ENCODE measurements at regions of chr1 and their contacts with region 1.

Region 1: GRCh38 chr1:39653546-39654031 is 14.1 kb upstream of the HEYL start:
- DNase-seq: peak; percentile 75
- CTCF ChIP-seq: peak; percentile 88

Region 2: GRCh38 chr1:39623053-39623452 is 30.5 kb before region 1 on chr1:
- CTCF ChIA-PET with region 1: interaction called, 43 read pairs
- POLR2A ChIA-PET with region 1: no interaction called
- DNase-seq: no peak
- CTCF ChIP-seq: no peak

Region 3: GRCh38 chr1:39639305-39640130 is 14.1 kb before region 1 on chr1 and contains the start of gene HEYL:
- CTCF ChIA-PET with region 1: interaction called, 44 read pairs
- POLR2A ChIA-PET with region 1: no interaction called
- DNase-seq: peak; percentile 71
- CTCF ChIP-seq: peak; percentile 29

Region 4: DNA sequence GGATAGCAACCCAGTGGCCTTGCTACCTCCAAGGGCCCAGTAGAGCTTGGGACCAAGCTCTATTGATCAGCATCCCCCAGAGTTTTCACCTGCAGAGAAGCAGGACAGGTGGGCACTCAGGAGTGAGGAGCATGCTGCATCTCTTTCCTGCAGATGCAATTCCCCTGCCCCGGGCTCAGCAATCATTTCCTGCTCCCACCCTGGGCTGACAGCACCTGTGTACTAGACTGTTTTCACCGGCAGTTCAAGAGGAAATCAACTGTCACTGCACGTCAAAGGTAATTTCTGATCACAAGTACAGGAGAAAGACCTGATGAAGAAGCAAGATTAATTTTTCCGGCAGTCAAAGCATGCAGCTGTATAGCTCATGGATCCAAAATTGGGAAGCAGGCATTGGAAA is 27.2 kb after region 1 on chr1:
- CTCF ChIA-PET with region 1: interaction called, 276 read pairs
- POLR2A ChIA-PET with region 1: no interaction called
- DNase-seq: no peak
- CTCF ChIP-seq: no peak

Region 5: GRCh38 chr1:39701049-39701439 is 47.5 kb after region 1 on chr1:
- CTCF ChIA-PET with region 1: interaction called, 12 read pairs
- POLR2A ChIA-PET with region 1: no interaction called
- DNase-seq: no peak
- CTCF ChIP-seq: no peak

Region 6: DNA sequence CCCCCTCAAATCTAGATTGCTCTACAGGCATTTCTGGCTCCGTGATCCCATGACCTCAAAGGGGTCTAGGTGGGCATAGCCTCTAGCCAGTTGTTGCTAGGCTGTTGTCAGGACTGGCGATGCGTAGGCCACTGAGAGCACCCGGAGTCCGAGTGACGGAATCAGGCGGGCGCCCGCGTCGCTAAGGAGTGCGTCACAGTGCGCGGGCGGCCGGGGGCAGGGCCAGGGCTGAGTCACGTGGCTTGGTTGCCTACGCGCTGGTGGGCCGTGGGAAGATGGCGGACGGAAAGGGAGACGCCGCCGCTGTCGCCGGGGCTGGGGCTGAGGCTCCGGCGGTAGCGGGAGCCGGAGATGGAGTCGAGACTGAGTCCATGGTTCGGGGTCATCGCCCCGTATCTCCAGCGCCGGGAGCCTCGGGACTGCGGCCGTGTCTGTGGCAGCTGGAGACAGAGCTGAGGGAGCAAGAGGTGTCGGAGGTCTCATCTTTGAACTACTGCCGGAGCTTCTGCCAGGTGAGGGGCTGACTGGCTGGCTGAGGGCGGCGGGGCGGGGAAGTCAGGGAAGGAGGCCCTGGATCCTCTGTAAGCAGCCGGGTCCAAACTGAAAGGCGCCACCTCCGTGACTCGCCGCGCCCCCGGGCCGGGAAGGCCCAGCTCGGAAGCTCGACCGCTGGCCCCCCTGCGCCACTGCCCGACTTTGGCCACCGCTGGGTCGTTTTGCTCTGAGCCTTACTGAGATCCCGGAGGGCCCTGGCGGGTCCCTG is 507.7 kb after region 1 on chr1 and contains the start of gene RLF:
- CTCF ChIA-PET with region 1: no interaction called
- POLR2A ChIA-PET with region 1: no interaction called
- DNase-seq: peak; percentile 96
- CTCF ChIP-seq: no peak